Natural killer cell (primary cell): ENCODE measurements at regions of chr1 and their contacts with region 1.

Region 1: GRCh38 chr1:169809370-169810095 is 14.8 kb upstream of the METTL18 start:
- DNase-seq: peak in 1 of 2 donors; percentile 67
- ATAC-seq: peak in 2 of 3 donors; percentile 48 to 50
- H3K4me3 ChIP-seq: no peak overlapping the region
- H3K4me3 Mint-ChIP-seq: no peak overlapping the region
- H3K27ac ChIP-seq: no peak overlapping the region
- H3K27ac Mint-ChIP-seq: no peak overlapping the region
- H3K4me1 ChIP-seq: no peaks in the 10 kb centered on the region
- H3K4me1 Mint-ChIP-seq: peaks cover 4 to 9% of the 10 kb centered on the region in 2 donors
- H3K27me3 ChIP-seq: no peaks in the 10 kb centered on the region
- H3K27me3 Mint-ChIP-seq: no peaks in the 10 kb centered on the region
- CTCF ChIP-seq: peak; percentile 78

Region 2: GRCh38 chr1:169586395-169587255 is 222.9 kb before region 1 on chr1 and contains the start of gene F5:
- intact Hi-C with region 1: loop called (anchors 1 kb)
- DNase-seq: peak; percentile 50 to 85
- ATAC-seq: peak; percentile 97 to 100 (median 99)
- H3K4me3 ChIP-seq: no peak within 1 kb of the TSS
- H3K4me3 Mint-ChIP-seq: peak within 1 kb of the TSS; percentile 51
- H3K27ac ChIP-seq: no peak within 1 kb of the TSS
- H3K27ac Mint-ChIP-seq: peak within 1 kb of the TSS in 1 of 2 donors; percentile 37
- H3K4me1 ChIP-seq: peaks cover 12% of the 10 kb centered on the region
- H3K4me1 Mint-ChIP-seq: peaks cover 7 to 13% of the 10 kb centered on the region in 2 donors
- H3K27me3 ChIP-seq: peaks cover 14% of the 10 kb centered on the region
- H3K27me3 Mint-ChIP-seq: peaks cover 16 to 28% of the 10 kb centered on the region in 2 donors
- CTCF ChIP-seq: peak; percentile 58
- total RNA-seq, gene F5: 0.02 to 1.7 (median 0.45) TPM

Region 3: GRCh38 chr1:169874229-169874628 is 64.7 kb after region 1 on chr1:
- intact Hi-C with region 1: no loop called
- DNase-seq: no peak
- ATAC-seq: no peak
- H3K4me3 ChIP-seq: no peak overlapping the region
- H3K4me3 Mint-ChIP-seq: no peak overlapping the region
- H3K27ac ChIP-seq: no peak overlapping the region
- H3K27ac Mint-ChIP-seq: no peak overlapping the region
- H3K4me1 ChIP-seq: no peaks in the 10 kb centered on the region
- H3K4me1 Mint-ChIP-seq: peaks cover 11 to 18% of the 10 kb centered on the region in 2 donors
- H3K27me3 ChIP-seq: no peaks in the 10 kb centered on the region
- H3K27me3 Mint-ChIP-seq: no peaks in the 10 kb centered on the region
- CTCF ChIP-seq: no peak

Region 4: GRCh38 chr1:170020859-170021258 is 211.3 kb after region 1 on chr1:
- intact Hi-C with region 1: no loop called
- DNase-seq: no peak
- ATAC-seq: no peak
- H3K4me3 ChIP-seq: no peak overlapping the region
- H3K4me3 Mint-ChIP-seq: no peak overlapping the region
- H3K27ac ChIP-seq: no peak overlapping the region
- H3K27ac Mint-ChIP-seq: no peak overlapping the region
- H3K4me1 ChIP-seq: no peaks in the 10 kb centered on the region
- H3K4me1 Mint-ChIP-seq: peaks cover 3 to 10% of the 10 kb centered on the region in 2 donors
- H3K27me3 ChIP-seq: no peaks in the 10 kb centered on the region
- H3K27me3 Mint-ChIP-seq: no peaks in the 10 kb centered on the region
- CTCF ChIP-seq: no peak

Region 5: DNA sequence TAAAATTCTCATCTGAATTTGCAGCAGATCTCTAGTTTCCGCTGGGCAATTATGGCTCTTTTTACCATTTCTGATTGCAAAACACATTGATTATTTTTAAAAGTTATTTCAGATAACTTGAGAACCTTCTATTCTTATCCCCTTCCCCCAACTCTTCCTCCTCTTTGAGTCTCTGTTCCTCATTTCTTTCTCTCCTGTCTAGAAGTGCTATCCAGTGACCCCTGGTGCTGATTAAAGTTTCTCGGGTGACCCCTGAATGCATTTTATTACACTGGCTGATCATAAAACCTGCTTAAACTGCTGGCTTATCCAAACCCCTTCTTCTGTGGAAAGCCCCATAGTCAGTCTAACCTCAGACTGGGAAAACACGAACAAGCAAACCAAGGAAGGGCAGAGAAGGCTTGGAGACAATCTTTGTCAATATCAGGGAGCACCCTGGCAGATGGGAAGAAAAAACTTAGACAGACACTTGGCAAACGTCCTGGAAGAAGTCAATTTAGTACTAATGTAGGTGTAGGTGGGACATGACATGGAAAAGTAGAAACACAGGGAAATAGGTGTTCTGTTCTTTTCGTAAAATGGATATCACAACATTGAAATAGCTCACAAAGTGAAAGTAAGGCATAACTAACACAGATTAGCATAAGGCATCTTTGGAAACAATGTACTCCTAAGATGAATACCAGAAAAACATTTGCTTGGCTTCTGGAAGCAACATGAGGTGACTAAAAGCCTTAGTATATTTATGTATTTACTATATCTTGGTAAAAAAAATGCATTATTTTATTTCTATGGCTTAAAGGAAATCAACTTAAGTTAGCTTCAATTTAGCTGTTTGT is 783.9 kb after region 1 on chr1:
- intact Hi-C with region 1: no loop called
- DNase-seq: no peak
- ATAC-seq: no peak
- H3K4me3 ChIP-seq: no peak overlapping the region
- H3K4me3 Mint-ChIP-seq: no peak overlapping the region
- H3K27ac ChIP-seq: no peak overlapping the region
- H3K27ac Mint-ChIP-seq: no peak overlapping the region
- H3K4me1 ChIP-seq: no peaks in the 10 kb centered on the region
- H3K4me1 Mint-ChIP-seq: no peaks in the 10 kb centered on the region
- H3K27me3 ChIP-seq: no peaks in the 10 kb centered on the region
- H3K27me3 Mint-ChIP-seq: peaks cover 17 to 44% of the 10 kb centered on the region in 2 donors
- CTCF ChIP-seq: no peak